Activated naive CD4-positive, alpha-beta T cell treated with anti-CD3 and anti-CD28 coated beads for 36 hours (primary cell): ENCODE measurements at regions of chr15 and their contacts with region 1.

Region 1: GRCh38 chr15:40782580-40783227 is 12.9 kb downstream of the C15orf62 start:
- DNase-seq: peak; percentile 88
- H3K4me3 Mint-ChIP-seq: no peak overlapping the region
- H3K27ac Mint-ChIP-seq: no peak overlapping the region
- H3K4me1 Mint-ChIP-seq: peaks cover 18% of the 10 kb centered on the region
- H3K27me3 Mint-ChIP-seq: no peaks in the 10 kb centered on the region

Region 2: GRCh38 chr15:40684381-40684780 is 98.3 kb before region 1 on chr15:
- CTCF ChIA-PET with region 1: interaction called, 28 read pairs
- intact Hi-C with region 1: loop called (anchors 1 kb)
- DNase-seq: no peak
- H3K4me3 Mint-ChIP-seq: no peak overlapping the region
- H3K27ac Mint-ChIP-seq: no peak overlapping the region
- H3K4me1 Mint-ChIP-seq: no peaks in the 10 kb centered on the region
- H3K27me3 Mint-ChIP-seq: no peaks in the 10 kb centered on the region

Region 3: DNA sequence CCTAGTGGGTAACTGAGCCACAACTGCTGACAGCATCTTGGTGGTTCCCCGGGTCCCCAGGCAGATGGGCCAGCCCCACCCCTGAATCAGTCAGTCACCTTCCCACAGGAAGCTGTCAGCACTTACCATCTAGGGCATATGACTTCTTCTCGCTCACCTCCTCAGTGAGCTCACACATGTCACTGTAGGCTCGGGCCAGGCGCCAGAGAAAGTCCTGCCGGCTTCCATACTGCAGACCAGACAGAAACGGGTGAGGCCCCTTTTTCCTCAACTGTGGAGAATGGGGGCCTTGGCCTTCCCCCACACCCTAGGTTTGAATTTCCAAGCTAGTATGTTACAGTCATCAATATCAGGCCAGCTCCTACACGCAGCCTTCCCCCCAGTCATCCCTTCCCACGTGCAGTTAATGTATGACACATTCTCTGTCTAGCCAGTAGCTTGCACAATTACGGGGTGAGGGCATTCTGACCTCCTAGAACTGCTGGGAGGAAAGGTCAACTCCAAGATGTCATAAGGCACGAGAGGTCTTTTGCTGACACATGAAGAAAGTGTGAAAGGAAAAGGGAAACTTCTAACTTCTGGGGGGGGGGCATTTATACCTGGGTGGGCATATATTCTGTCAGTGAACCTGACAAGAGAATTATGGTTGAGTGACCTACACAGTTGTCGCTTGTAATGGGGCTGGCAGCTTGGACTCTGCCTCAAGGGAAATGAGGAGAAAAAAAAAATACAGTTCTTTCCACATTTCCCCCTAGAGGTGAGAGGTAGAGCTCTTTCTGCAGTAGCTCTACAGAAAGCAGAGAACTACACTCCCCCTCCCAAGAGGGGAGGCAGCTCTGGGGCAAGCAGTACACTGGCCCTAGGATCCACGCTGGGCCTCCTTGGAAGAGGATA is 38.5 kb before region 1 on chr15:
- CTCF ChIA-PET with region 1: interaction called, 32 read pairs
- intact Hi-C with region 1: loop called (anchors 1 kb)
- DNase-seq: peak; percentile 81
- H3K4me3 Mint-ChIP-seq: no peak overlapping the region
- H3K27ac Mint-ChIP-seq: peak overlapping the region; percentile 48
- H3K4me1 Mint-ChIP-seq: peaks cover 15% of the 10 kb centered on the region
- H3K27me3 Mint-ChIP-seq: no peaks in the 10 kb centered on the region

Region 4: GRCh38 chr15:40754883-40755811 is 27.6 kb before region 1 on chr15 and contains the start of gene RMDN3:
- CTCF ChIA-PET with region 1: interaction called, 11 read pairs
- intact Hi-C with region 1: loop called (anchors 2 kb)
- DNase-seq: peak; percentile 95
- H3K4me3 Mint-ChIP-seq: peak within 1 kb of the TSS; percentile 94
- H3K27ac Mint-ChIP-seq: peak within 1 kb of the TSS; percentile 98
- H3K4me1 Mint-ChIP-seq: peaks cover 25% of the 10 kb centered on the region
- H3K27me3 Mint-ChIP-seq: no peaks in the 10 kb centered on the region
- total RNA-seq, gene RMDN3: 17.8 to 19.2 TPM

Region 5: DNA sequence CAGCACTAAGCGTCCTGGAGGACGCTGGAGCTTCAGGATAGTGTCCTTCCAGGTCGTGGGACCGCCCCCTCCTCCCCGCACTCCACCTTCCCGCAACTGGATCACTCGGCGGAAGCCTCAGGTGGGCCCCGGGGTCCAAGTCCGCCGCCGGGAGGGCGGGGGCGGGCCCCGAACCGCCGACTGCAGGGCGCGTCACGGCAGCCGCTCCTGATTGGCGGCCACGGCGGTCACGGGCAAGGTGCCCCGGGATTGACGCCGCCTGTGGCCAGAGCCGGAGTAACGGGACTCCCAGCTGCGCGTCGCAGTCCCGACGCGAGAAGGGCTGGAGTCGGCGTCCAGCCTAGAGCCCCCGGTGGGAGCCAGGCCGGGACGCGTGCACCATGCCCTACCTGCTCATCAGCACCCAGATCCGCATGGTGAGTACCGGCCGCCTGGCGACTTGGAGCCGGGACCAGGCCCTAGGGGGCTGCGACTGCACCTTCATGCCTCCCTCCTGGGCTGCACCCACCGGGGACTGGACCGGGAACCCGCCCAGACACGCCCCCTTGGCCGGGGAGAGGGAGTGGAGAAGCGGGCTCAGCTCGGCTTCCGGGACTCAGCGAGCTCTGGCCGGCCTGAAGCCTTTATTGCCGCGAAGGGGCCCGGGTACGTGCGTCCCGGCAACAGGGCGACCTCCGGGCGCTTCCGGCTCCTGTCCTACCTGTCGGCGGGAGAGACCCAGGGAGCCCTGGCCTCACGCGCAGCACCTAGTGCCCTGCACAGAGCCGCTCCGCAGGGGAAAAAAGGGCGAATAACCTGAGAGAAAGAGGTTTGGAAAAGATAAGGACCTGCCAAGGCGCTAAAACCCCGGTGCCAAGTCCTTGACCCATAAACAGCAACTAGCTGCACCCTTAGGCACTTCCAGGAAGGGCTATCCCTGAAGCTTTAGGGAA is 18.6 kb before region 1 on chr15 and contains the start of gene GCHFR:
- CTCF ChIA-PET with region 1: interaction called, 25 read pairs
- intact Hi-C with region 1: no loop called
- DNase-seq: peak; percentile 75
- H3K4me3 Mint-ChIP-seq: peak within 1 kb of the TSS; percentile 83
- H3K27ac Mint-ChIP-seq: peak within 1 kb of the TSS; percentile 70
- H3K4me1 Mint-ChIP-seq: peaks cover 37% of the 10 kb centered on the region
- H3K27me3 Mint-ChIP-seq: no peaks in the 10 kb centered on the region
- total RNA-seq, gene GCHFR: 28.1 to 32.7 TPM

Region 6: GRCh38 chr15:40769274-40770146 is 13.2 kb before region 1 on chr15 and contains the start of gene C15orf62:
- CTCF ChIA-PET with region 1: interaction called, 25 read pairs
- intact Hi-C with region 1: no loop called
- DNase-seq: peak; percentile 82
- H3K4me3 Mint-ChIP-seq: peak within 1 kb of the TSS; percentile 40
- H3K27ac Mint-ChIP-seq: peak within 1 kb of the TSS; percentile 87
- H3K4me1 Mint-ChIP-seq: peaks cover 42% of the 10 kb centered on the region
- H3K27me3 Mint-ChIP-seq: no peaks in the 10 kb centered on the region
- total RNA-seq, gene C15orf62: 0.10 to 0.33 TPM

Region 7: DNA sequence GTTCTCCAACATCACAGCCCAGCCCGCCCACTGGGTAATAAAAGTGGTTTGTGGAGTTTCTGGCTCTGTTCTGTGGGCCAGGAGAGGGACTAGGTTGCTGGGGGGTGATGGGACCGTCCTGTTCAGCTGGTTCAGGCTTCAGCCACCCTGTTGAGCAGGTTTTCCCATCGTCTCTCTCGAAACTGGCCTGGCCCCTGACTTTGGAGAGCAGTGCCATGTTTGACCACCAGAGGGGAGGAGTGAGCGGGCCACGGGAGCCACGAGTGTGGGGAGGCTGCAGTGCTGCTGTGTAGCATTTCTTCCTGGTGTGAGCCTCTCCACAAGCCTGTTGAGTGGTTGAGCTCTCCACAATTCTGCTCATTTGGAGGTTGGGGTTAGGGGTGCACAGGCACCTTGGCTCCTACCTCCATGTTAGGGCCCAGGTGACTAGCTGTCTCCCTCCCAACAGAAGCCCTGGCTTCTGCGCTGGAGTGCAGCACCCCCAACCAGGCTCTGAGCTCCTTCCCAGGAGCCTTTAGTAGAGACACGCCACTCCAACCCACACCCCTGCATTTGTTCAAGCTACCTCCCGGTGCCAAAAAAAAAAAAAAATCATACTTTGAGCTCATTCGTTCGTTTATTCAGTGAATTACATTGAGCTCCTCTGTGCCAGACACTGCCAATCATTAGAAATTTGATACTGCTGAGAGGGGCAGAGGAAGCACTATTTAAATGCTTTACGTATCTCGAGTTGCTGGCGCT is 75.1 kb after region 1 on chr15:
- CTCF ChIA-PET with region 1: interaction called, 12 read pairs
- intact Hi-C with region 1: no loop called
- DNase-seq: peak; percentile 85
- H3K4me3 Mint-ChIP-seq: no peak overlapping the region
- H3K27ac Mint-ChIP-seq: no peak overlapping the region
- H3K4me1 Mint-ChIP-seq: peaks cover 11% of the 10 kb centered on the region
- H3K27me3 Mint-ChIP-seq: no peaks in the 10 kb centered on the region